ENCODE measurements at regions of chr2 and their contacts with region 1.

Region 1: GRCh38 chr2:85602476-85603234 is at the start of gene TMEM150A:
- DNase-seq: peak; percentile 90
- H3K4me3 ChIP-seq: peak within 1 kb of the TSS; percentile 69 to 94 (median 74)
- H3K27ac ChIP-seq: peak within 1 kb of the TSS; percentile 11
- H3K4me1 ChIP-seq: peaks cover 22% of the 10 kb centered on the region
- H3K27me3 ChIP-seq: no peaks in the 10 kb centered on the region
- CTCF ChIP-seq: peak in 1 of 2 donors; percentile 38
- total RNA-seq, gene TMEM150A: 12.5 to 14.2 TPM

Region 2: GRCh38 chr2:85354286-85355072 is 248.2 kb before region 1 on chr2 and contains the starts of genes ELMOD3 and RETSAT:
- CTCF ChIA-PET with region 1: no interaction called
- dilution Hi-C with region 1: no loop called
- in situ Hi-C with region 1: no loop called
- intact Hi-C with region 1: loop called (anchors 5 kb)
- DNase-seq: peak; percentile 99
- H3K4me3 ChIP-seq: peak within 1 kb of the TSS; percentile 78 to 95 (median 84)
- H3K27ac ChIP-seq: peak within 1 kb of the TSS; percentile 54
- H3K4me1 ChIP-seq: peaks cover 11% of the 10 kb centered on the region
- H3K27me3 ChIP-seq: no peaks in the 10 kb centered on the region
- CTCF ChIP-seq: no peak
- total RNA-seq, gene ELMOD3: 17.5 to 23.0 TPM
- total RNA-seq, gene RETSAT: 94.7 to 157 TPM

Region 3: GRCh38 chr2:85577386-85578242 is 25.0 kb before region 1 on chr2 and contains the start of gene VAMP8:
- CTCF ChIA-PET with region 1: no interaction called
- dilution Hi-C with region 1: no loop called
- in situ Hi-C with region 1: no loop called
- intact Hi-C with region 1: loop called (anchors 2 kb)
- DNase-seq: peak; percentile 80
- H3K4me3 ChIP-seq: peak within 1 kb of the TSS; percentile 70 to 82 (median 77)
- H3K27ac ChIP-seq: peak within 1 kb of the TSS; percentile 52
- H3K4me1 ChIP-seq: peaks cover 18% of the 10 kb centered on the region
- H3K27me3 ChIP-seq: no peaks in the 10 kb centered on the region
- CTCF ChIP-seq: no peak
- total RNA-seq, gene VAMP8: 94.0 to 166 TPM

Measured in mammary epithelial cell (primary cell).